Mammary epithelial cell (primary cell): ENCODE measurements at regions of chr22 and their contacts with region 1.

Region 1: DNA sequence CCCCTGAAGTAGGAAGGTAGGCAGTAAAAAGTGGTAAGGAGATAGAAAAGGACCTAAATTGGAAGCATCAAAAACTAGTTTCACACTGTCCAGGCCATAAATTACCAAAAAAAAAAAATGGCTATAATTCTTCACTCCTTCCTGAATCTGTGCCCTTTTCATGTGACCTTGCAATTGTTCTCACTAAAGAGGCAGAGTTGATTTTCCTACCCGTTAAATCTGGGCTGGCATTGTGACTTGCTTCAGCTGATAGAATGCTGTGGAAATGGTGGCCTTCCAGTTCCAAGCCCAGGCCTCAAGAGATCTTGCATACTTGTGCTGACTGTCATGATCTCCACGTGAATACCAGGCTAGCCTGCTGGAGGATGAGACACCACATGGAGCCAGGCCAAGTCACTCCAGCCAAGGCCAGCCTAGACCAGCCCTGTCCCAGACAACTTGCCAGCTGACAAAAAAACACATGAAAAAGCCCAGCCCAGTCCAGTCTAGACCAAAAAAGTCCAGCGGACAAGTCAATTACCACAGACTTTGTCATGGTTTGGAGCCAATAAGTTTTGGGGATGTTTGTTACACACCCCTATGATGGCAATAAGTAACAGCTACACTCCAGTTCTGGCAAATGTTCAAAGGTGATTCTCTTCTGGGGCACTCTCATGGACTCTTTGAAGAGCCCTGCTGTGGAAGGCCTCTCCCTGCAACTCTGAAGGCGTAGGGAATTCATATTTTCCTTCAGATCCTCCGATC is 51.4 kb upstream of the NUP50 start:
- DNase-seq: peak; percentile 84
- H3K4me3 ChIP-seq: no peak overlapping the region
- H3K27ac ChIP-seq: no peak overlapping the region
- H3K4me1 ChIP-seq: peaks cover 6% of the 10 kb centered on the region
- H3K27me3 ChIP-seq: no peaks in the 10 kb centered on the region
- CTCF ChIP-seq: no peak

Region 2: GRCh38 chr22:45125188-45125587 is 12.9 kb after region 1 on chr22:
- CTCF ChIA-PET with region 1: no interaction called
- dilution Hi-C with region 1: no loop called
- in situ Hi-C with region 1: no loop called
- intact Hi-C with region 1: loop called (anchors 1 kb)
- DNase-seq: no peak
- H3K4me3 ChIP-seq: no peak overlapping the region
- H3K27ac ChIP-seq: no peak overlapping the region
- H3K4me1 ChIP-seq: peaks cover 8% of the 10 kb centered on the region
- H3K27me3 ChIP-seq: no peaks in the 10 kb centered on the region
- CTCF ChIP-seq: no peak

Region 3: DNA sequence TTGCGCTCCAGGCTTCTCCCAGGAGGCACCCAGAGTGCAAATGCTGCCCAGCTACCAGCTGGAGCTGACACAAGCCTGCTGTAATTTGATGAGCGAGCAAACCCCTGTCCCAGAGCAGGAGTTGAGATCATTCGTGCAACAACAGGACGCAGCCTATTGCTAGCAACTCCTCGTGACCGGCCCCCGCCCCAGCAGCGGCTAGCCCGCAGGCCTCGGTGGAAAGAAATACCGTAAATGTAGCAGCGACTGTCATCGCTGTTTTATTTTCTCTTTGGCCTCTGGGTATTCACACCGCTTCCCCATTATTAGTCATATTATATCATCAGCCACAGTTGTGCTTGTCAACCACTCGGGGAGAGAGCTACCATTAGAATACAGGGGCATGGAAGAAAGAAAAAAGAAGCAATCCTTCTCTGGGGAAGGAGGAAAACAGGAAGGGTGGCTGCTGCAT is 500.2 kb after region 1 on chr22:
- CTCF ChIA-PET with region 1: no interaction called
- dilution Hi-C with region 1: no loop called
- in situ Hi-C with region 1: no loop called
- intact Hi-C with region 1: no loop called
- DNase-seq: peak; percentile 91
- H3K4me3 ChIP-seq: peak overlapping the region in 2 of 3 experiments; percentile 8 to 24
- H3K27ac ChIP-seq: peak overlapping the region; percentile 64
- H3K4me1 ChIP-seq: peaks cover 20% of the 10 kb centered on the region
- H3K27me3 ChIP-seq: no peaks in the 10 kb centered on the region
- CTCF ChIP-seq: no peak